ENCODE measurements at regions of chr6 and their contacts with region 1.

Region 1: GRCh38 chr6:153032255-153032882 is 29.9 kb upstream of the MTRF1L start:
- DNase-seq: no peak
- ATAC-seq: peak; percentile 42

Region 2: DNA sequence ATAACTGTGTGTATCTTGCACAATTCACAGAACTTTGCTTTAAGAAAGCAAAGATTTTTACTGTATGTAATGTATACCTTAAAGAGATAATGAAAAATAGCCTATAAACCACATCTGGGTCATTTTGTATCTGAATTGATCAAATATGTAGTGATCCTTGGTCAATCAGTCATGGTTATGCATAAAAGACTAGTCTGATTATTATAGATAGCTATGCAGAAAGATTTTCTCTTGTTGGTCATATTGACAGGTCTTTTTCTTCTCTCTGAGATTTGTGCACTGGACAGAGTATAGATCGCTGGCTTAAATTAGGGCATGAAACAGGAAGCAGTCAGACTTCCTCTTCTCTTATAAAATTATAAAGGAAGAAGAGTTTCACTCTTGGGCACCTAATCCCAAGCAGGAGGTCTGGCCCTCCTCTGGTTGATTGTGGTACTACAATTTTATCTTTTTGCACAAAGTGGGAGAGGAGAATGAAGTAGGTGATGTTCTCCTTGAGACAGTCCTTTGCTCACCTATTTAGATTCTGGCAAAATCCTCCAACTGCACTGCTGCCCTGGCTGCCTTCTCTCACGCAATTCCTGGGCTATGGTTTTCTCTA is 479.6 kb after region 1 on chr6:
- intact Hi-C with region 1: loop called (anchors 5 to 10 kb)
- DNase-seq: no peak
- ATAC-seq: peak; percentile 29